ENCODE measurements at regions of chr11 and their contacts with region 1.

Region 1: GRCh38 chr11:85941380-85941973 is 86.3 kb downstream of the CCDC83 start:
- DNase-seq: no peak
- ATAC-seq: peak; percentile 89

Region 2: DNA sequence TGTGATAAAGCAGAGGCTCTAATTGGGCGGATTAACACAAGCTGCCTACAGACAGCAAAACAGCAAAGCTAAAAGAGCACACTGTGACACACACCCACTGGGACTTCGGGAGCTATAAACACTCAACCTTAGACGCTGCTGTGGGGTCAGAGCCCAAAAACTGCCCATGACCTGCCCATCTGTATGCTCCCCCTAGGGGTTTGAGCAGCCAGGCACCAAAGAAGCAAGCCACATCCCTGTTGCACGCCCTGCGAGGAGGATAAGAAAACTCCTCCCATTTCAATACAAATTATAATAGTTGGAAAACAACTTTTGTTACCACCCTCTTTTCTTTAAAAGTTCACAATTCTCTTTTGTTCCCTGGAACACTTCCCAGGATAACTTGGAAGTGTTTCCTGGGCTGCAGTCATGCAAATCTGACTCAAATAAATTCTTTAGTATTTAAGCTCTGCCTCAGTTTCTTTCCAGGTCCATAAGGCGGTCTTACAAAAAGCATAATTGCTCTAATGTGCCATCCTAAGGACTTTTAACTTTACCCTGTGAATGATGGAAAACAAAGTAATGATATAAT is 400.8 kb before region 1 on chr11:
- intact Hi-C with region 1: no loop called
- DNase-seq: no peak
- ATAC-seq: peak; percentile 25

Region 3: GRCh38 chr11:86218125-86219084 is 276.9 kb after region 1 on chr11:
- intact Hi-C with region 1: loop called (anchors 5 kb)
- DNase-seq: peak; percentile 67
- ATAC-seq: peak; percentile 97

Region 4: DNA sequence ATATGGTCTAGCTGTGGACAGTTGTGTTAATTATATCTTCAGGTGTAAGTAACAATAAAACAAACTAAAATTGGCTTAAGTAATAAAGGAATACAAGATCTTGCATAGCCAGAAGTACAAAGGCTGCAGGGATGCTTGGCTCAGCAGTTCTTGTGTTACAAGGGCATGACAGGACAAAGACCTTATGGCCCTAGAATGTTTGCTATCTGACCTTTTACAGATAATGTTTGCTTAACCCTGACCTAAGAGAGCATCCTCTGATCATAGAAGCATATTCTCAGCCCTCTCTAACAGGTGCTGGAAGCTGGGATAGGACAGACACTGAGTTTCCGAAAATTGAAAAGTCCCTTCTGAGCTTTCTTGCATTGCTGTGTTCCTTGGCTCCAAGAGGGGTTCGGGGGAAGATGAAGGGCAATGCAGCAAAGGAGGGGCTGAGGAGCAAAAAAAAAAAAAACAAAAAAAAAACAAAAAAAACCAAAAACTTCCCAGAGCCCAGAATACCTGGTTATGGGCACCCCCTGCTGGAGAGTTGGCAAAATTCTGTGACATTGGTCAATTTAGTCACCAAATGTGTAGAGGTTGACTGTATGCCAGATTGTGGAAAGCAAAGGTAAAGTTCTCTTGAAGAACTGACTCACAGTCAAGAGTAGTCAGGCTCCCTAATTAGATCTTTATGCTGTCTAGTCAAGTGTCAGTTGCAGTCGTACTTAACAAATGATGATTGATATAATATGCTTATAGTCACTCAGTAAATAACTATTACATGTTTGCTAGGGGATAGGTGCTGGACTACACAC is 350.2 kb after region 1 on chr11:
- intact Hi-C with region 1: loop called (anchors 5 kb)
- DNase-seq: no peak
- ATAC-seq: peak; percentile 49

Measured in Right ventricle myocardium superior (tissue), 1 donor.